K562 (cell line): ENCODE measurements at regions of chr1 and their contacts with region 1.

Region 1: DNA sequence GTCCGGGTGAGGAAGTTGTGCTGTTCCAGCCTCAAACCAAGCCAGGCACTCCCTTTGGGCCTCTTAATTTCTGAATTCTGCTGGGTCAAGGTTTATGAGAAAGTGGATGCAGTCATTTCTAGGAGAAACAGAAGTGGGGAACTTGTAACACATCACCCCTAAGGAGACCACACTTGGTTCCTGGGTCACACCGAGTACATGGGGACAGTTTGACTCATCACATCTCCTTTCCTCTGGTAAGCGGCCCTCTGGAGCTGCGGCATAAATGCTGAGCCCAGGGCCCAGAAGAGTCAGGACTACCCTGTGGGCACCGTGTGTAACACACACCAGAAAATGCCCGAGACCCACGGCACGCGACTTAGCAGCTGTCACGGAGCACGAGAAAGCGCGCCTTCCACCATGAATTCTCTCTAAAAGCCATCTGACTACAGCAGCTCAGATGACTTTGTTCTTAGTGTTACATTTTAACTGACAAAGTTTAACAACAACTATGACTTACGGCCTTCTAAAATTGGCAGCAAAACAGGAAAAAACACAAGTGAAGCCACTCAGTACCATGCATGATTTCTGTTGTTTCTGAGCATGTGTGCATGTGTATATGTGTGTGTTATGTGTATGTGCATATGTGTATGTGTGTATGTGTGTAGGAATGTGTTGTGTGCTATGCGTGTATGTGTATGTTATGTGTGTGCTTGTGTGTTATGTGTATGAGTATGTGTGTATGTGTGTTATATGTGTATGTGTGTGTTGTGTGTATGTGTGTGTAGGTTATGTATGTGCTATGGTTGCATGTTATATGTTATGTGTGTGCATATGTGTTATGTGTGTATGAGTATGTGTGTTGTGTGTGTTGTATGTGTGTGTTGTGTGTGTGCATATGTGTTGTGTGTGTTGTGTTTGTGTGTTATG is 50.8 kb downstream of the TOMM20 start:
- DNase-seq: no peak
- ATAC-seq: no peak
- H3K4me3 ChIP-seq: no peak overlapping the region
- H3K27ac ChIP-seq: no peak overlapping the region; the same call in 2 of the 3 replicates
- H3K4me1 ChIP-seq: peaks cover 21% of the 10 kb centered on the region in 2 experiments
- H3K27me3 ChIP-seq: no peaks in the 10 kb centered on the region
- CTCF ChIP-seq: no peak
- EP300 ChIP-seq: no peak
- POLR2A ChIP-seq: no peak
- RAD21 ChIP-seq: no peak

Region 2: DNA sequence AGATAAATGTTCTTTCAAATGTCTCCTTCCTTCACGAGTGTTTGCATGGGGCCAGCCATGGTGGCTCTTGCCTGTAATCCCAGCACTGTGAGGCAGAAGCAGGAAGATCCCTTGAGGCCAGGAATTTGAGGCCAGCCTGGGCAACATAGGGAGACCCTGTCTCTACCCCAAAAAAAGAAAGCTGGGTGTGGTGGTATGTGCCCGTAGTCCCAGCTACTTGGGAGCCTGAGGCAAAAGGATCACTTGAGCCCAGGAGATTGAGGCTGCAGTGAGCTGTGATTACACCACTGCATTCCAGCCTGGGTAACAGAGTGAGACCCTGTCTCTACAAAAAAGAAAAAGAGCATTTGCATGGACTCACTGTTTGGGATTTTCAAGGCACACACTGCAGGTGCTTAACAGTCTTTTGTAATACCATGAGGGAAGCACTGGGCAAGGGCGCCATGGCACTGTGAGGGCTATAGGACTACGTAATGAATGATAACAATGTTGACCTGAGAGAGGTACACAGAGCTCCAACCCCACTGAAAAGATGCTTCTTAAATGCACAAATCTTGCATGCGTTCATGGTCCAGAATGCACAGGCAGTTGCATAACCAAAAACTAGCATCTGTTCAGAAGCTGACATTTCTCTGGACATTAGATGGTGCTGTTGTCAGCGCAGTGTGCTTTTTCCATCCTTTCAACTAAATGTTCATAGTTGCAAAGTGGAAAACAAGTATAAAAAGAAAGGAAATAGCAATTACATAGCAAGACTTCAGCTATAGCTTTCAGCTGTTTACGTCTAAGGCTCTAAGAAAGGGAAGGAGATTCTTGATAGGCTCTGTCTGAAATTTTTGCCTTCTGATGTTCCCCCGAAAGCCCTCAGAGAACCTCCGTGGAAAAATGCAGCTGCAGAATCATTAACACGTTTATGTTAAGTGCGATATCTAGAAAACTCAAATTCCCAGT is 591.1 kb before region 1 on chr1:
- CTCF ChIA-PET with region 1: no interaction called
- POLR2A ChIA-PET with region 1: no interaction called
- in situ Hi-C with region 1: no loop called
- intact Hi-C with region 1: loop called (anchors 1 kb)
- DNase-seq: peak in 2 of 4 experiments; percentile 45 to 64
- ATAC-seq: peak; percentile 83
- H3K4me3 ChIP-seq: no peak overlapping the region
- H3K27ac ChIP-seq: no peak overlapping the region
- H3K4me1 ChIP-seq: peaks cover 0 to 15% of the 10 kb centered on the region in 2 experiments; a peak in 3 of 5 replicates
- H3K27me3 ChIP-seq: peaks cover 0 to 7% of the 10 kb centered on the region in 2 experiments; a peak in 1 of 5 replicates
- CTCF ChIP-seq: peak; percentile 67 to 84 (median 77)
- EP300 ChIP-seq: no peak
- POLR2A ChIP-seq: no peak
- RAD21 ChIP-seq: peak; percentile 89 to 95

Region 3: GRCh38 chr1:234755449-234755863 is 322.4 kb before region 1 on chr1:
- CTCF ChIA-PET with region 1: no interaction called
- POLR2A ChIA-PET with region 1: no interaction called
- in situ Hi-C with region 1: loop called (anchors 10 kb)
- intact Hi-C with region 1: loop called (anchors 5 kb)
- DNase-seq: peak in 2 of 4 experiments; percentile 27 to 66
- ATAC-seq: peak; percentile 69
- H3K4me3 ChIP-seq: no peak overlapping the region
- H3K27ac ChIP-seq: no peak overlapping the region
- H3K4me1 ChIP-seq: peaks cover 14 to 36% of the 10 kb centered on the region in 2 experiments; a peak in 4 of 5 replicates
- H3K27me3 ChIP-seq: no peaks in the 10 kb centered on the region
- CTCF ChIP-seq: no peak
- EP300 ChIP-seq: no peak
- POLR2A ChIP-seq: no peak
- RAD21 ChIP-seq: peak in 1 of 2 experiments; percentile 16; a peak in 1 of 4 replicates

Region 4: DNA sequence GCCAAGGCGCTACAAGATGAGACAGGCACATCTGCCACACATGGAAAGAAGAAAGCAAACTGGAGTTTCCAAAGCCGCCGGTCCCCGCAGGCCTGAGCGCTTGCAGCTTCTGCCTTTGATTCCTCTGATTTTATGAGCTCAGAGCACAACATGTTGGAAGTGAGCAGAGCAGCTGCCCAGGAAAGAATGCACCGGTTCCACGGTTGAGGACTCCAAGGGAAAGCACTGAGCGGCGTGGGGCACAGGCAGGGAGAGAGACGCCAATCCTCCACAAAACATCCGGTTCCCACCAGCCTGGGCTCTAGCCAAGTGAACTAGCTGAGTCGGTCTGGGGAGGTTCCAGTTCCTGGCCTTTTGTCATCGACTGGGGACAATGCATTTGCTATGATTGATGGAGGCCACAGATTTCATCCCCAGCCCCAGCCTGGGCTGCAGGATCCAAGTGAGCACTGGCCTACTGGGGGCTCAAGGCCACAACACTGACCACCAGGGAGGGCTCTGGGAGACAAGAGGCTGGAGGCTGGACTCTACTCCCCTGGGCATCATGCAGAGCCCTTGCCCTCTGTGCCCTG is 214.8 kb before region 1 on chr1:
- CTCF ChIA-PET with region 1: no interaction called
- POLR2A ChIA-PET with region 1: no interaction called
- in situ Hi-C with region 1: no loop called
- intact Hi-C with region 1: loop called (anchors 1 kb)
- DNase-seq: no peak
- ATAC-seq: no peak
- H3K4me3 ChIP-seq: no peak overlapping the region
- H3K27ac ChIP-seq: no peak overlapping the region
- H3K4me1 ChIP-seq: peaks cover 26 to 42% of the 10 kb centered on the region in 2 experiments; a peak in 4 of 5 replicates
- H3K27me3 ChIP-seq: no peaks in the 10 kb centered on the region
- CTCF ChIP-seq: no peak
- EP300 ChIP-seq: no peak
- POLR2A ChIP-seq: no peak
- RAD21 ChIP-seq: 0 out of 4 replicates have a peak, but pooled peaks of 1 of the 2 experiments have one; percentile 9

Region 5: GRCh38 chr1:234918181-234918841 is 159.5 kb before region 1 on chr1:
- CTCF ChIA-PET with region 1: no interaction called
- POLR2A ChIA-PET with region 1: no interaction called
- in situ Hi-C with region 1: no loop called
- intact Hi-C with region 1: loop called (anchors 5 kb)
- DNase-seq: no peak
- ATAC-seq: no peak; the same call in 2 of the 3 replicates
- H3K4me3 ChIP-seq: no peak overlapping the region
- H3K27ac ChIP-seq: no peak overlapping the region
- H3K4me1 ChIP-seq: peaks cover 17 to 19% of the 10 kb centered on the region in 2 experiments; a peak in 4 of 5 replicates
- H3K27me3 ChIP-seq: no peaks in the 10 kb centered on the region
- CTCF ChIP-seq: no peak
- EP300 ChIP-seq: no peak
- POLR2A ChIP-seq: no peak
- RAD21 ChIP-seq: no peak

Region 6: GRCh38 chr1:234963180-234963903 is 114.5 kb before region 1 on chr1:
- CTCF ChIA-PET with region 1: no interaction called
- POLR2A ChIA-PET with region 1: no interaction called
- in situ Hi-C with region 1: no loop called
- intact Hi-C with region 1: loop called (anchors 5 kb)
- DNase-seq: peak; percentile 60 to 80 (median 70)
- ATAC-seq: peak; percentile 64
- H3K4me3 ChIP-seq: no peak overlapping the region
- H3K27ac ChIP-seq: peak overlapping the region; percentile 82
- H3K4me1 ChIP-seq: peaks cover 27 to 66% of the 10 kb centered on the region in 2 experiments
- H3K27me3 ChIP-seq: no peaks in the 10 kb centered on the region
- CTCF ChIP-seq: no peak
- EP300 ChIP-seq: peak; percentile 75
- POLR2A ChIP-seq: no peak
- RAD21 ChIP-seq: peak in 1 of 2 experiments; percentile 18; a peak in 2 of 4 replicates

Region 7: DNA sequence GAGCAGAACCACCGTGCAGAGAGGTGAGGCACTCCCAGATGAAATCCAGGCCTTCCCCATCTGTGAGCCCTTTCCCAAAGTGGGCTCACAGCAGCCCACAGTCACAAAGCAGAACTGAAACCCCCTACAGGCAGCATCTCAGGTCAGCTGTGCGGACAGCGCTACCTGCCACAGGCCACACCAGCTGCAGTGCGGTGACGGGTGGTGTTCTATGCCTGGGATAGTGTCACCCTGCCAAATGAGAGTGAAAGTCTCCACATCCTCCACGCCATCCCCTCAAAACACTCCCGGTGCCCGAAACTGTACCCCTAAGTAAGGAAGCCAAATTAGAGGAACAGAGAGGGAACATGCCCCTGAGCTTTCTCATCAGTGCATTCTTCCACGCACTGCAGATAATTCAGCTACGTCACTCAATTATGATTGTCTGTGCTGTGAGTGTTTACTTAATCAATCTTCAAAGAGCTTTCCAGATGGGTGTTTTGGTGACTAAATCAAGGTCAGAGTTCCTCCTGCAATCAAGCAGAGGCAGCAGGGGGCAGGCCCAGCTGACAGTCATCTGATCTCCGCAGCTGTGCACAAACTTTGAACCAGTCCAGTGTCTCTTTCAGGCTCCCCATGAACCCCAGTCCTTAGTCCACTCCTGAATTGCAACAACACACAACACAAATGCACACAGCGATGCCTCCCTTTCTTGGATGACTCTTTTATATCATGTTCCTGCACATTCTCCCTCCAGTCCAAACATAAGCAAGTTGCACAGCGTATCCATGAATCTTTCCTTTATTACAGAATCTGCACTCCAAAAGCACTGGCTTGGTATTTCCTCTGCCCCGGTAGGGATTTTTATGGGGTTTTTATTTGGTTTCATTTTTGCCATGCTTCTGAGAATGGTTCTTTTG is 99.2 kb before region 1 on chr1:
- CTCF ChIA-PET with region 1: no interaction called
- POLR2A ChIA-PET with region 1: no interaction called
- in situ Hi-C with region 1: no loop called
- intact Hi-C with region 1: loop called (anchors 5 kb)
- DNase-seq: peak; percentile 60 to 84 (median 78)
- ATAC-seq: peak; percentile 16
- H3K4me3 ChIP-seq: no peak overlapping the region
- H3K27ac ChIP-seq: peak overlapping the region; percentile 2; the same call in 1 of the 3 replicates
- H3K4me1 ChIP-seq: peaks cover 49 to 85% of the 10 kb centered on the region in 2 experiments
- H3K27me3 ChIP-seq: no peaks in the 10 kb centered on the region
- CTCF ChIP-seq: peak in 2 of 3 experiments; percentile 10 to 41; a peak in 3 of 6 replicates
- EP300 ChIP-seq: peak; percentile 81
- POLR2A ChIP-seq: no peak
- RAD21 ChIP-seq: peak; percentile 39 to 57

Region 8: GRCh38 chr1:235855811-235856429 is 778.1 kb after region 1 on chr1:
- CTCF ChIA-PET with region 1: no interaction called
- POLR2A ChIA-PET with region 1: no interaction called
- in situ Hi-C with region 1: no loop called
- intact Hi-C with region 1: no loop called
- DNase-seq: no peak
- ATAC-seq: no peak
- H3K4me3 ChIP-seq: no peak overlapping the region
- H3K27ac ChIP-seq: no peak overlapping the region
- H3K4me1 ChIP-seq: no peaks in the 10 kb centered on the region
- H3K27me3 ChIP-seq: peaks cover 0 to 6% of the 10 kb centered on the region in 2 experiments; a peak in 1 of 5 replicates
- CTCF ChIP-seq: no peak
- EP300 ChIP-seq: no peak
- POLR2A ChIP-seq: no peak
- RAD21 ChIP-seq: no peak